ENCODE measurements at regions of chr6 and their contacts with region 1.

Region 1: DNA sequence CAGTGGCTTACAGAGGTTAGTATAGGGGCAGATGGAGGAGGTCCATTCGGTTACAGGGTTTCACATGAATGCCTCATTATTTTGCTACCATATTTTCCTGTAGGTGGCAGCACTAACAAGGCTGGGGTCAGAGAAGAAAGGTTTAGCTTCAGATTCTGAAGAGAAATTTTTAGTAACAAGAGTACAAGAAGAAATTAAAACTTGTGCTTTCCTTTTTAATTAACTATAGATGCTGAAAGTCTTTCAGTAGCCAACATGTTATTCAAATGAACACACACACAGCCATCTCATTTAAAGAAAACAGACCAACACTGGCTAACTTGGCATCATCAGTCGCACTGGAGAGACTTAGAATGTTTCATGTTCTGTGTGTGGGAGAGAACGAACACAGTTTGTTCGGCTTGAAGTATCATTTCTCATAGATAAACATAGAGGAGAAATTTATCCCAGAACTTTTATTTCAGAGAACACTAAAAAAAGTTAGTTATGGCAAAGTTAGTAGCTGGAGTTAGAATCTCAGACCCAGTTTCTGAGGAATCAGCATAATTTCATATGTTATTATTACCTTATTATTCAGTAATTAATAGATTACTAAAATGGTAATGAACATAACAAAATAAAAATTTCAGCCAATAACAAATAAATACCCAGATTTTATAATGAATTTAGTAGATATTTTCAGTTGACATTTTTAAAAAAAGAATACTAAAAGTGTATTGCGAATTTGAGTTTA is 314.0 kb upstream of the RSPO3 start:
- DNase-seq: peak in 1 of 2 donors; percentile 4
- ATAC-seq: peak; percentile 66 to 87
- H3K4me3 ChIP-seq: no peak overlapping the region
- H3K27ac ChIP-seq: no peak overlapping the region
- H3K4me1 ChIP-seq: peaks cover 0 to 3% of the 10 kb centered on the region in 2 donors
- H3K27me3 ChIP-seq: no peaks in the 10 kb centered on the region
- CTCF ChIP-seq: peak; percentile 39 to 79 (median 62)
- POLR2A ChIP-seq: no peak

Region 2: DNA sequence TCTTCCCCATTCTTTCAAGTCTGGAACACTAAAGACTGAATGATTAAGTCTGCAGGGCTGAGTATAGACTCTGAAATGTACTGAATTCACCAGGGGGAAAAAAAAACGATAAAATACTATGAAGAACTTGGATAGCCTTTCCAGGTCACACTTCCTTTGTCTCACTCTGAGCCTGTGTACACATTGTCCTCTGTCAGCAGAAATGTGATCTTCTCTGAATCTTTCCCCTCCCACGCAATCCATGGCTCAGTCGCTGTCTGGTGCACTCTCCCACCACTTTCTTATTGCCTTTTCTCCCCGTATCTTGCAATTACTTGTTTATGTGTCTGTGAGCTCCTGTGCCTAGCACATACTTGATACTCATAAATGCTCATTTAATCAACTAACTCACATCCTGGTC is 101.4 kb after region 1 on chr6:
- in situ Hi-C with region 1: no loop called
- intact Hi-C with region 1: no loop called
- DNase-seq: no peak
- ATAC-seq: peak; percentile 76 to 85
- H3K4me3 ChIP-seq: no peak overlapping the region
- H3K27ac ChIP-seq: no peak overlapping the region
- H3K4me1 ChIP-seq: peaks cover 0 to 11% of the 10 kb centered on the region in 2 donors
- H3K27me3 ChIP-seq: no peaks in the 10 kb centered on the region
- CTCF ChIP-seq: no peak
- POLR2A ChIP-seq: no peak

Region 3: GRCh38 chr6:127186889-127187288 is 382.4 kb after region 1 on chr6:
- in situ Hi-C with region 1: loop called in 1 of 4 experiments (anchors 25 kb)
- intact Hi-C with region 1: loop called (anchors 2 kb)
- DNase-seq: peak; percentile 6 to 58
- ATAC-seq: no peak
- H3K4me3 ChIP-seq: no peak overlapping the region
- H3K27ac ChIP-seq: peak overlapping the region in 2 of 4 donors; percentile 74 to 78
- H3K4me1 ChIP-seq: peaks cover 26 to 29% of the 10 kb centered on the region in 2 donors
- H3K27me3 ChIP-seq: no peaks in the 10 kb centered on the region
- CTCF ChIP-seq: peak; percentile 15 to 45 (median 22)
- POLR2A ChIP-seq: no peak

Region 4: GRCh38 chr6:127192911-127193541 is 388.5 kb after region 1 on chr6:
- in situ Hi-C with region 1: loop called in 1 of 4 experiments (anchors 25 kb)
- intact Hi-C with region 1: loop called (anchors 2 kb)
- DNase-seq: no peak
- ATAC-seq: peak; percentile 68
- H3K4me3 ChIP-seq: no peak overlapping the region
- H3K27ac ChIP-seq: peak overlapping the region; percentile 72 to 78 (median 74)
- H3K4me1 ChIP-seq: peaks cover 42 to 44% of the 10 kb centered on the region in 2 donors
- H3K27me3 ChIP-seq: no peaks in the 10 kb centered on the region
- CTCF ChIP-seq: no peak
- POLR2A ChIP-seq: no peak

Measured in gastrocnemius medialis (tissue), 4 donors.